AG04449 (cell line): ENCODE measurements at regions of chr6 and their contacts with region 1.

Region 1: DNA sequence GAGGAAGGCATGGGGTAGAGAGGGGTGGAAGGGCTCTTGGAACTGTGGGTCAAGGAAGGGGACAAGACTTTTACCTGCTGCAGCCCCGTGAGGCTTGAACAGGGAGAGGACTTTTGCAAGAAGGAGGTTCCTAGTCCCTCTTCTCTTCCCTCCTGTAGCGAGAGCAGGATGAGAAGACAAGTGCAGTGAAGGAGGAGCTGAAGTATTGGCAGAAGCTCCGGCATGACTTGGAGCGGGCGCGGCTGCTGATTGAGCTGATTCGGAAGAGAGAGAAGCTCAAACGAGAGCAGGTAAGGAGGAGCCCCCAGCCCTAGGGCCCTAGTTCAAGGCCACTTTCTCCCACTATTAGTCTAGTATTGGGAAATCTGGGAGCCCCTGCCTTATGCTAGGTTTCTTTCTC is 10.6 kb downstream of the BRPF3 start:
- DNase-seq: no peak
- H3K4me3 ChIP-seq: no peak overlapping the region
- CTCF ChIP-seq: no peak

Region 2: DNA sequence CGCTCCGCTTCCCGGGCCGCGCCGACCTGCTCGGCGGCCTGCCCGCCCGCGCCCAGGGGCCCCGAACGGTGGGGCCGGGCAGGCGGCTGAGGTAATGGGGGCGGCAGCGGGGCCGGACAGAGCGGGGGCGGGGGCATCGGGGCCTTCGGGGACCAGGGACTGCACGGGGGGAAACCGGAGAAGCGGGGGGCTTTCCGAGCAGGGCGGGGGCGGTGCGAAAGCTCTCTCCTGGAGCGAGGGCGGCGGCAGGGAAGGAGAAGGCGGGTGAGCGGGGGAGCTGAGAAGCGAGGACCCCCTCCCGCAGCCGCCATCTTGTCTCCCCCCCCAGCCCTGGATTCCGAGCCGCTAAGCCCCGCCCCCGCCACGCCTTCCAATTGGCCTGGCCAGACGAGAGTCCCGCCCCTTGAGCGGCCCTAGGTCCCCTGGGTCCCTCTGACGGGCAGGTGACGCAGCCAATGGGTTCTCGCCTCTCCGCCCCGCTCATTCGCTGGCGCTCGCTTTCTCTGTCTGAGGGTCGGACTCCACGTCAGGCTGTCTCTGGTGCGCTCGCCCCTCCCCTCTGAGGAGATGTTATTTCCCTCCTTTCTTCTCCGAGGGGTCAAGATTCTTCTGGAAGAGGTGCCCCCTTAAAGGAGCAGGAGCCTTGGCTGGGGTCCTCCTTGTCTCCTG is 10.1 kb before region 1 on chr6:
- CTCF ChIA-PET with region 1: interaction called, 10 read pairs
- POLR2A ChIA-PET with region 1: no interaction called
- DNase-seq: peak; percentile 60
- H3K4me3 ChIP-seq: peak overlapping the region; percentile 74
- CTCF ChIP-seq: no peak